ENCODE measurements at regions of chr11 and their contacts with region 1.

Region 1: DNA sequence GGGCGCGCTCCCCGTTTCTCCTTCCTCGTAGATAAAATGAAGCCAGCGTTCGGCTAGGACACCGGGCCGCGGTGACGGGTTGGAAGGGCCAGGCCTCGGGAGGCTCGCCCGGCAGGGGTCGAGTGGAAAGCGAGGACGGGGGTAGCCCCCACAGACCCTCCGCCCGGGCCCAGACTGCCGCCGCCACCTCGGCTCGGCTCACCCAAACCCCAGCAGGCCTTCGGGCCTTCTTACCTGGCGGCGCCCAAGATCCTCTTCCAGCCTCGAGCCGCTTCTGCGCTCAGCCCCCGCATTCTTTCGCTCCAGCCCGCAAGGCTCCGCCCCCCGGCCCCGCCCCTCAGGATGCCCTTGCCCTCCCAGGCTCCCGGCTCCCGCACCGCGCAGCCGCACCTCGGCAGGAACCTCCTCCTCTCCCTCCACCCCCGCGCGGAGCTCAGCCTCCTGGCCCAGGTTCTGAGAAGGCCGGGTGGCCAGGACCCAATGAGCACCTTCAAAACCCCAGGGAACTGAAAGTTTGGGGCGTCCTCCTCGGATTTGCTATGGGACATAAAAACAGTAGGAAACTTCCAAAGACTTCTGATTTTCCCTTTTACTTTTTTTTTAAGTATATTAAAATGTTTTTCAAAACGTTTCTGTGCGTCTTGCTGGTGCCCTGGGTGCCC is at the start of gene CD59:
- DNase-seq: peak; percentile 93 to 94
- ATAC-seq: peak; percentile 96
- H3K4me3 ChIP-seq: peak within 1 kb of the TSS; percentile 75
- H3K27ac ChIP-seq: peak within 1 kb of the TSS; percentile 85 to 93
- H3K4me1 ChIP-seq: peaks cover 34% of the 10 kb centered on the region
- CTCF ChIP-seq: no peak
- EP300 ChIP-seq: no peak
- POLR2A ChIP-seq: peak; percentile 83
- RAD21 ChIP-seq: no peak
- polyA plus RNA-seq, gene CD59: 335 and 499 TPM in 2 replicates

Region 2: GRCh38 chr11:33362051-33362910 is 374.0 kb before region 1 on chr11:
- CTCF ChIA-PET with region 1: interaction called, 20 read pairs
- POLR2A ChIA-PET with region 1: no interaction called
- DNase-seq: peak; percentile 15 to 47
- ATAC-seq: peak; percentile 33 to 75; a peak in 4 of 6 replicates
- H3K4me3 ChIP-seq: no peak overlapping the region
- H3K27ac ChIP-seq: no peak overlapping the region
- H3K4me1 ChIP-seq: no peaks in the 10 kb centered on the region
- CTCF ChIP-seq: peak; percentile 83
- EP300 ChIP-seq: no peak
- POLR2A ChIP-seq: no peak
- RAD21 ChIP-seq: peak; percentile 85 to 92

Region 3: DNA sequence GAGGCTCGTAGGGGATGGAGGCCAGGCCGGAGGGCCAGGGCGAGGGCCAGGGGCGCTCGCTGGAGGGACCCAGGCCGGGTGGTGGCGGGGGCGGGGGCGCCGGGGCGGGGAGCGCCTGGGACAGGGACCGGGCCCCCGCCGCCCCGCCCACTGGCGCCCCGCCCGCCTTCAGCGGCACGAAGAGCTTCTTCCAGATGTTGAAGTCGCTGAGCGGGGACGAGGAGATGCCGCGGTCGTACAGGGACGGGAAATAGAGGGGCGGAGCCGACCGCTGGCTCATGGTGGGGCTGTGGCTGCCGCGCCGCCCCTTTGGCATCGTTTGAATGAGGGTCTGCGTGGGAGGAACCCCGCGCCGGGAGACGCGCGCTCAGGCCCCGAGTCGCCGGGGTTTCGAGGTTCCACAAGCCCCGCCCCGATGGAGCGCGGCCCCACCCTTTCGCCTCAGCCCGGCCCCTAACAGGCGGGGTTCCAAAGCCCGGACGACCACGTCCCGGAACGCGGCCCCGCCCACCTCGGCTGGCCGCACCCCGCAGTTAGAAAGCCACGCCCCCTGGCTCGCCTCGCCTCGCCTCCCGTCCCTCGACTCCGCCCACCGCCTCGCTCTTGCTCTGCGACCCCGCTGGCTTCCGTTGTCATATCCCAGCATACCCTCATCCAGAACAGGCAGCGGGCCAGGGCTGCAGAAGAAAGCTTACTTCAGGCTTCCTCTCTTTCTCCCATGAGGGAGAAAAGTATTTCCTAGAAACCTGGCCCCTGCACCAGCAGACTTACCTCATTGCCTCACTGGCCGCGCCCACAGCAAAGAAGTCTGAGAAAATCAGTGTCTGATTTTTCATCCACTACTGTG is 35.6 kb before region 1 on chr11 and contains the start of gene C11orf91:
- CTCF ChIA-PET with region 1: interaction called, 4 read pairs
- POLR2A ChIA-PET with region 1: interaction called, 37 read pairs
- DNase-seq: peak; percentile 70 to 93
- ATAC-seq: peak; percentile 77 to 85
- H3K4me3 ChIP-seq: peak within 1 kb of the TSS; percentile 52
- H3K27ac ChIP-seq: peak within 1 kb of the TSS; percentile 82 to 89
- H3K4me1 ChIP-seq: peaks cover 54% of the 10 kb centered on the region
- CTCF ChIP-seq: no peak
- EP300 ChIP-seq: no peak
- POLR2A ChIP-seq: 0 out of 2 replicates have a peak, but pooled peaks have one; percentile 16
- RAD21 ChIP-seq: no peak
- polyA plus RNA-seq, gene C11orf91: 0.42 TPM in 1 of 2 replicates, not detected in the other

Region 4: GRCh38 chr11:33716236-33716635 is 20.0 kb before region 1 on chr11:
- CTCF ChIA-PET with region 1: interaction called, 26 read pairs
- POLR2A ChIA-PET with region 1: interaction called, 22 read pairs
- DNase-seq: peak in 1 of 2 experiments; percentile 62
- ATAC-seq: peak; percentile 68 to 78; a peak in 5 of 6 replicates
- H3K4me3 ChIP-seq: no peak overlapping the region
- H3K27ac ChIP-seq: peak overlapping the region; percentile 39 to 42; a peak in 3 of 6 replicates
- H3K4me1 ChIP-seq: peaks cover 47% of the 10 kb centered on the region
- CTCF ChIP-seq: peak; percentile 57
- EP300 ChIP-seq: no peak
- POLR2A ChIP-seq: no peak
- RAD21 ChIP-seq: peak; percentile 59 to 65

Region 5: GRCh38 chr11:33722579-33723225 is 13.6 kb before region 1 on chr11:
- CTCF ChIA-PET with region 1: interaction called, 26 read pairs
- POLR2A ChIA-PET with region 1: interaction called, 10 read pairs
- DNase-seq: peak in 1 of 2 experiments; percentile 58
- ATAC-seq: peak; percentile 39 to 47
- H3K4me3 ChIP-seq: no peak overlapping the region
- H3K27ac ChIP-seq: peak overlapping the region; percentile 80 to 90
- H3K4me1 ChIP-seq: peaks cover 62% of the 10 kb centered on the region
- CTCF ChIP-seq: no peak
- EP300 ChIP-seq: no peak
- POLR2A ChIP-seq: no peak
- RAD21 ChIP-seq: no peak